OCI-LY7 (cell line): ENCODE measurements at regions of chr6 and their contacts with region 1.

Region 1: GRCh38 chr6:30344868-30345671 is at the start of gene RPP21:
- DNase-seq: peak; percentile 88
- H3K4me3 ChIP-seq: peak within 1 kb of the TSS; percentile 82
- H3K27ac ChIP-seq: peak within 1 kb of the TSS; percentile 52
- H3K4me1 ChIP-seq: peaks cover 23% of the 10 kb centered on the region
- CTCF ChIP-seq: no peak
- total RNA-seq, gene RPP21: 77.3 and 88.1 TPM in 2 replicates

Region 2: GRCh38 chr6:29752451-29753308 is 592.4 kb before region 1 on chr6:
- CTCF ChIA-PET with region 1: no interaction called
- POLR2A ChIA-PET with region 1: no interaction called
- intact Hi-C with region 1: loop called (anchors 5 kb)
- DNase-seq: peak; percentile 90
- H3K4me3 ChIP-seq: peak overlapping the region; percentile 92
- H3K27ac ChIP-seq: peak overlapping the region; percentile 73
- H3K4me1 ChIP-seq: peaks cover 24% of the 10 kb centered on the region
- CTCF ChIP-seq: peak; percentile 93

Region 3: DNA sequence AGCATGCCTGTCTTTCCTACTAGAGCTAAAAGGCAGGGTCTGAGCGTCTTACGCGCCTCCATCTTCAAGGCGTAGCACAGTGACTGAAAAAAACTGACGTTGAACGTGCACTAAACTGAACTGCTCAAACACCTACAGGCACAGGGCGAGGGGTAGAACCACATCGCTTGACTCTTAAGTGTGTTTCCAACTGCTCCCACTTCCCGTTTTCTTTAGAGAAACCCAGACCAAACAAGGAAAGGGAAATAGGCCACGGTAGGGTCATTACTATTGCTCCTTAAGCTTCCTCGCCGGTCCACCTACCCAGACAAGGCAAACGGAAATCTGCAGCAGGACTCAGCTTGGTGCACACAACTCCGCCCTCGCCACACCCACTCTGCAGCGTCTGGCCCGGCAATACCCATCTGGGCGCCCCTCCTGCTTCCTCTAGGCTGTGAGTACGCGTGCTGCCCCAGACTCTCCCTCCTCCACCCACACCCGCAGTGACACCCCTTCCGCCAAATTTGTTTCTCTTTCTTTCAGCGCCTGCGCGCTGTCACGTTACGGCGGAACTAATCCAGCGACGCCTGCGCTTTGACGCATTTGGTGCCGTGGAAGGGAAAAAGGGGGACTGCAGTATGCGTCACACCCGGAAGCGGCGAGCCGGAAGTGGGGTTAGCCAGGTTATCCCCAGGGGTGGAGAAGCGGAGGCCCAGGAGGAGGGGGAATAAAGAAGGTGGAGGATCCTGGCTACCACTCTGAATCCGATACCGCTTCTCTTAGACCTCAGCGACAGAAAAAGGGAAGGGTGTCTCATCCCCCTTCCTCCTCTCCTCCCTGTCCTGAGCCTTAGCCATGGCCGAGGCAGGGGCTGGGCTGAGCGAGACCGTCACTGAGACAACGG is 278.3 kb before region 1 on chr6 and contains the start of gene PPP1R11:
- CTCF ChIA-PET with region 1: no interaction called
- POLR2A ChIA-PET with region 1: no interaction called
- intact Hi-C with region 1: loop called (anchors 10 kb)
- DNase-seq: peak; percentile 99
- H3K4me3 ChIP-seq: peak within 1 kb of the TSS; percentile 77
- H3K27ac ChIP-seq: peak within 1 kb of the TSS; percentile 83
- H3K4me1 ChIP-seq: peaks cover 35% of the 10 kb centered on the region
- CTCF ChIP-seq: no peak
- total RNA-seq, gene PPP1R11: 30.6 and 35.6 TPM in 2 replicates

Region 4: DNA sequence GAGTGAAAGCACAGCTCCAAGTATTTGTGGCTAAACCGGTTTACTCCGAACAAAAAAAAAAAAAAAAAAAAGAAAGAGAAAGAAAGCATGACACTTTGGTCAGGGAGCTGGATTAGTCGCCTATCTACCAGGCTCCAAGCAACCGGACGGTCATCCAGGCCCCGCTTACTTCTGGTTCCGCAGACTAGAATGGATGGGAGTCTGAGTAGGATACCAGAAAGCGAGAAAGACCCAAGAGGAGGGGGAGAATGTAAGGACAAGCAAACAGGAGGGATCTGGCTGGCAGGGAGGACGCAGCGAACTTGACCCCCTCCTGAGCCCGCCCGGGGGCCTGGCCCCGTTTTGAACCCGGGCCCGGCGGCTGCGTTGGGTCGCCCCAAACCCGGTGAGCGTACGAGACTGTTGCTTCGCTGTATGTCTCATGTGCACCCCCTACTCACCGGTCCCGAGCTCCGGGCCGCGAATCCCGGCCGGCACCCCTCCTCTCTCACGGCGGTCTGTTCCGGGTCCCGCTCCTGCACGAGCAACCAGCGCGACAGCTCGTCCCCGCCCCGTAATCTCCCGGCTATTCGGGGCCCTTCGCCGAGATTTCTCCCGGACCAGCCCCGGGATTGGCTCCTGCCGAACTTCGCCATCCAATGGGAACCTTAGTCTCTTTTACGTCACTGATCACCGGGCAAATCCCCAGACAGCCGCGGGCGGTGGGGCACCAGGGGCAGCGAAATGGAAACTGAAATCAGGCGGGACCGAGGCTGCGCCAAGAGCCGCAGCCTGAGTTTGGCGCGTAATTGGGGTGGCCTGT is 132.0 kb before region 1 on chr6 and contains the start of gene TRIM26:
- CTCF ChIA-PET with region 1: interaction called, 3 read pairs
- POLR2A ChIA-PET with region 1: no interaction called
- intact Hi-C with region 1: loop called (anchors 2 kb)
- DNase-seq: peak; percentile 97
- H3K4me3 ChIP-seq: peak within 1 kb of the TSS; percentile 93
- H3K27ac ChIP-seq: peak within 1 kb of the TSS; percentile 90
- H3K4me1 ChIP-seq: peaks cover 70% of the 10 kb centered on the region
- CTCF ChIP-seq: no peak
- total RNA-seq, gene TRIM26: 53.2 and 55.0 TPM in 2 replicates

Region 5: DNA sequence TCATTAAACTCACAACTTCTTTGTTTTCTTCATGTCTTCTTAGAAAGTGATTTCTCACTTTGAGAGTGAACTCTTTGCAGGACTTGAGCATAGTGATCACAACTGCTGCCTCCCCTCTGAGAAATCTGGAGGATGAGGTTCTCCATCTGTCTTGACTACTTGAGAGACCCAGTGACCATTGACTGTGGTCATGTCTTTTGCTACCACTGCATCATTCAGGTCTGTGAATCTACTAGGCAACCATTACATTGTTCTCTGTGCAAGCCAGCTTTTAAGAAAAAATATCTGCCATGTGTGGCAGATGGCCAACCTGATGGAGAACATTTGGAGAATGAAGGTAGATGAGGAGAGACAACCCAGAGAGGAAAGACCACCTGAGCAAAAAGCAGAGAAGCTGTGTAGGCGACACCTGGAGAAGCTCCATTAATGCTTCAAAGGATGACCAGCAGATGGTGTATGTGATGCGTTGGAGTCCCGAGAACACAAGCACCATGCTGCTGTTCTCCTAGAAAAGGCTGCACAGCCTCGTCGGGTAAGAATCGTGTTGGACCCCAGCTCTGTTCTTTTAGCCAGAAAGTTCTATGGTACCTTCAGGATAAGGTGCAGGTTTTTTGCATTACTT is 106.8 kb before region 1 on chr6:
- CTCF ChIA-PET with region 1: no interaction called
- POLR2A ChIA-PET with region 1: no interaction called
- intact Hi-C with region 1: loop called (anchors 5 kb)
- DNase-seq: peak; percentile 61
- H3K4me3 ChIP-seq: no peak overlapping the region
- H3K27ac ChIP-seq: no peak overlapping the region
- H3K4me1 ChIP-seq: no peaks in the 10 kb centered on the region
- CTCF ChIP-seq: peak; percentile 76

Region 6: DNA sequence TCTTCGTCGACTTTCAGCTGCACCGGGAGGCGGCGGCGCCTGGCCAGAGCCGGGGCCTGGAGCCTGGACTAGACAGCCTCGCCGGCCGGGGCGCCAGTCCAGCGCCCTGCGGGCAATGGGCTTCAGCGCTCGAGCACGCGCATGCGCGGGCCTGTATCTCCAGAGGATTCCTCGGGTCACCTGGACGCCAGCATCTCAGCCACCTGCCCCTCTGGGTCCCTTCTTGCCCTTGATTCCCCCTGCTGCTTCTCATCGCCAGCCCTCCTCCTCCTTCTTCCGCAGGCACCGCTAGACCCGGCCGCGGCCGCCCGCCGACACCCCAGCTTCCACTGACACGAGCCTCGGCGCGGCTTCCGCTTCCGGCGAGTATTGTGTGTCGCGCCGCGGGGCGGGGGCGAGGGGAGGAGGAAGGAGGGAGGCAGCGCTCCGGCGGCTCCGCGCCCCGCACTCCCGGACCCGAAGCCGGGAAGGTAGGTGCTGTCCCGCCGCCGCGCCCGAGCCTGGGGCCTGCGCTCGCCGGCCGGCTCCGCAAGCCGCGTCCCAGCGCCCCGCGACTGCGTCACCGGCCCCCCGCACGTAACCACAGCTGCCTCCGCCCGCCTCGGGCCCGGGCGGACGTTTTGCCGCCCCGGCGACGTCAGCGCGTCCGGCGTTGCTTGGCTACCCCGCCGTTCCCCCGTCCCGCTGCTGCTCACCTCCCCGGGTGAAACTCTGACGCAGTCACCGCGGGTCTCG is 18.4 kb before region 1 on chr6 and contains the start of gene TRIM39:
- CTCF ChIA-PET with region 1: no interaction called
- POLR2A ChIA-PET with region 1: interaction called, 3 read pairs
- intact Hi-C with region 1: loop called (anchors 1 kb)
- DNase-seq: peak; percentile 88
- H3K4me3 ChIP-seq: peak within 1 kb of the TSS; percentile 84
- H3K27ac ChIP-seq: peak within 1 kb of the TSS; percentile 84
- H3K4me1 ChIP-seq: peaks cover 36% of the 10 kb centered on the region
- CTCF ChIP-seq: no peak
- total RNA-seq, gene TRIM39: 10.9 and 11.4 TPM in 2 replicates

Region 7: DNA sequence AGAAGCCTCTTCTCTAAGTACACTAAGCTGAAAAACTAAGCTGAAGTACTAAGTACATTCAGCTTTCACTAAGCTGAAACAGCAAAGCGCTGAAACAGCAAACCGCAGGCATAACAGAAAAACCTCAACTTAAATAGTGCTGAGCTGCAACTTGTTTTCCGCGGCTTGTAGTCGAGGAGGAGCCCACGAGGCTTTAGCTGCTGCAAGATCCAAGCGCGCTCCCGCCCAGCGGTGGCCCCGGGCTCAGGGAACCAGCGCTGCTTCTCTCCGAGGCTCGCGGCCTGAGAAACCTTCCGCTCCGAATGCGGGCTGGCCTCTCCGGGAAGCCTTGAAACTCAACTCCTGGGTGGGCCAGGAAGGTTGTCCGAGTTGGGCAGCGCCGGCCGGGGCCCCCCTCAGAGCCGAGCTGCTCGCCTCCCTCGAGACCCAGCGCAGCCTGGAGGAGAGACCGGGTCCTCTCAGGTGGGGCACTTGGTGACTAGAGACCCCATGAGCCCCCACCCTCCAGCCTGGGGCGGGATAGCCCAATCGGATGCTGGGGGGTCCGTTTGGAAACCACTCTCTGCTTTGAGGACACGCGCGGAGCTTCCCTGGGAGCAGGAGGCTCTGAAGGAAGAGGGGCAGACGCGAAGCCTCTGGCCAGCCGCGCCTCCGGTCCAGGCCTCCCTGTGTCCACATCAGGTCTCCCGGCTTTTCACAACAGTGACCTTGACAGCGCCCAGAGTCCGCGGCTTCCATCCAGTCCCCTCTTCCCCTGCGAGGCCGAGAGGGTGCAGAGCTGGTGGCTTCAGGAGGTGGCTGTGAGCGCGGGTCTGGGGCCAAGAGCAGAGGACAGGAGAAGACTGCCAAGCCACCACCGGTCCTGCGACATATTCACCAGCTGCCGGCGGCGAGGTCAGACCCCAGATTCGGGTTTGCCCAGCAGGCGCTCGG is 106.1 kb after region 1 on chr6:
- CTCF ChIA-PET with region 1: no interaction called
- POLR2A ChIA-PET with region 1: no interaction called
- intact Hi-C with region 1: no loop called
- DNase-seq: no peak
- H3K4me3 ChIP-seq: no peak overlapping the region
- H3K27ac ChIP-seq: no peak overlapping the region
- H3K4me1 ChIP-seq: no peaks in the 10 kb centered on the region
- CTCF ChIP-seq: no peak

Region 8: GRCh38 chr6:30769088-30769852 is 424.2 kb after region 1 on chr6:
- CTCF ChIA-PET with region 1: no interaction called
- POLR2A ChIA-PET with region 1: no interaction called
- intact Hi-C with region 1: no loop called
- DNase-seq: no peak
- H3K4me3 ChIP-seq: no peak overlapping the region
- H3K27ac ChIP-seq: no peak overlapping the region
- H3K4me1 ChIP-seq: peaks cover 8% of the 10 kb centered on the region
- CTCF ChIP-seq: no peak